Endothelial cell of umbilical vein (primary cell): ENCODE measurements at regions of chr2 and their contacts with region 1.

Region 1: DNA sequence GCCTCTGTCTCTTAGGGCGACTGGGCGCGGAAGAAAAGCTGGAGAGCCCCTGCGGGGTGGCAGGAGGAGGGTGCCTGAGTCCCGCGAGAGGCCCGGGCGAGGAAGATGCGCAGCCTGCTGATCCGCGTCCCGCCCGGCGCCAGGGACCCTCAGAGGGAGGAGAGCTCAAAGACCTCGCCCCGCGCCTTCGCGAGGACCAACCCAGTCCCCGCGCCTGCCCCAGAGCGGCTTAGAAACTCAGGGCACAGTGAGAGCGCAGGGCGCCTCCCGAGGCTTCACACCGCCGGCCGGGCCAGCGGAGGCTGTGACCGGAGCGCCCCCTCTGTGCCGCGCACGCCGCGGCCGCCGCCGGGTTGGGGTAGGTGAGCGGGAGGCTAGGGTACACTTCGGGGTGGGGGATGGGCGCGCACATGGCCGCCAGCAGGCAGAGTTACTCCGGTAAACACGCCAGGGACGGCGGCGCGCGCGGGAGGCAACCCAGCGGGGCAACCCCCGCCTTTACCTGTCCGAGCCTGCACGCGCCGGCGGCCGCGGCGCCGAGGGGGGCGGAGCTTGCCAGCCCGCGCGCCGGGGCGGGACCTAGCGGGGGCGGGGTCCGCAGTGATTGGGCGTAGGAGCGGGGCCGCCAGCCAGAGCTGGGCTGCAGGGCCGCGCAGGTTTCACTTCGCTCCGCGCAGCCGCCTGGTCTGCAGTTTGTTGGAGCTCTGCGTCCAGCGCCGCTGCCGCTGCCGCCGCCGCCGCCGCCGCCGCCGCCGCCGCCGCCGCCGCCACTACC is at the start of gene BCL2L11:
- DNase-seq: peak; percentile 92
- H3K4me3 ChIP-seq: peak within 1 kb of the TSS; percentile 18 to 93 (median 40)
- H3K27ac ChIP-seq: no peak within 1 kb of the TSS
- H3K4me1 ChIP-seq: peaks cover 37% of the 10 kb centered on the region
- H3K27me3 ChIP-seq: peaks cover 17 to 47% of the 10 kb centered on the region in 2 experiments
- CTCF ChIP-seq: peak; percentile 8 to 38
- POLR2A ChIP-seq: peak; percentile 70
- total RNA-seq, gene BCL2L11: 22.2 and 26.6 TPM in 2 replicates

Region 2: DNA sequence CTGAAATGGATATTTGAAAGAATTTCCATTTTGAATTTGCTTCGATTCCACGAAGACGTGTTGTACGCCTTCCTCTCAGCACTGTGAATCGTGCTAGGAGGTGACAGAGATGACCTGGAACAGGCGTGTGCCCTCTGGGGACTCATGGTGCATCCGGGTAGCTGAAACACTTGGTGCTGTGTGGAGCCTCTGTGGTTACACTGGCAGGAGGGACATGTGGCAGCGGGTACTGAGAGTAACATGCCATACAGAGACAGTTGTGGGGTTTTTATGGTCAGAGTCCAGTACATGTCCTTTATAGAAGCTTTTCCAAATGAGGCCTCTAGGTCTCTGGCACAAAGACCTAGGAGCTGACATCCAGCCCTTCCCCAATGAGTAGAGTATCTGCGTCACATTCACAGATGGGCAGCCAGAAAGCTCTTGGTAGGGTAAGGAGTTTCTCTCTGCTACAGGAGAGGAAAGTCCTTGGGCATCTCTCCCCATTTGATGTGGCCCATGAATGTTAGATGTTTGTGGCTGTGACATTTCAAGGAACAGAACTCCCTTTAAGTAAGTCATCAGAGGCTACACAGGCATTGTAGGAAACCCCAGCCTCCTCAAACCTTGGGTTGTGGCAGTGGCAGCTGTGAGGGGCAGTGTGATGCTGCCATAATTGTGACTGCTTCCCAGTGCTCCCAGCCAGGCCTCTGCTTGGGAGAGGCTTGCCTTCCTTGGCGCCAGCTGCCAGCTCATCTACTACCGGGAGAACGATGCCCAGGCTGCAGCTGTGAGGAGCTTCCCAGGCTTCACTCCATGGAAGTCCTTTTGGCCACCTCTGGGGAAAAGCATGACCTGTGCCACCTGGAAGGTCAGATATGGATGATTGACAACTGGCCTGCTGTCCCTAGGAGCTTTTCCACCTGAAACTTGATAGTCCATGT is 307.5 kb before region 1 on chr2:
- CTCF ChIA-PET with region 1: interaction called, 6 read pairs
- POLR2A ChIA-PET with region 1: no interaction called
- dilution Hi-C with region 1: no loop called
- intact Hi-C with region 1: loop called (anchors 5 kb)
- DNase-seq: no peak
- H3K4me3 ChIP-seq: no peak overlapping the region
- H3K27ac ChIP-seq: no peak overlapping the region
- H3K4me1 ChIP-seq: no peaks in the 10 kb centered on the region
- H3K27me3 ChIP-seq: peaks cover 3 to 13% of the 10 kb centered on the region in 2 experiments
- CTCF ChIP-seq: no peak
- POLR2A ChIP-seq: no peak

Region 3: GRCh38 chr2:111071600-111072171 is 48.8 kb before region 1 on chr2:
- CTCF ChIA-PET with region 1: interaction called, 5 read pairs
- POLR2A ChIA-PET with region 1: interaction called, 3 read pairs
- dilution Hi-C with region 1: no loop called
- intact Hi-C with region 1: loop called (anchors 1 kb)
- DNase-seq: peak; percentile 99
- H3K4me3 ChIP-seq: peak overlapping the region in 1 of 3 experiments; percentile 15
- H3K27ac ChIP-seq: peak overlapping the region; percentile 95
- H3K4me1 ChIP-seq: peaks cover 22% of the 10 kb centered on the region
- H3K27me3 ChIP-seq: no peaks in the 10 kb centered on the region
- CTCF ChIP-seq: no peak
- POLR2A ChIP-seq: no peak

Region 4: GRCh38 chr2:111162718-111163331 is 42.4 kb after region 1 on chr2:
- CTCF ChIA-PET with region 1: interaction called, 10 read pairs
- POLR2A ChIA-PET with region 1: interaction called, 9 read pairs
- dilution Hi-C with region 1: no loop called
- intact Hi-C with region 1: loop called (anchors 1 kb)
- DNase-seq: peak; percentile 97
- H3K4me3 ChIP-seq: no peak overlapping the region
- H3K27ac ChIP-seq: peak overlapping the region; percentile 39
- H3K4me1 ChIP-seq: peaks cover 31% of the 10 kb centered on the region
- H3K27me3 ChIP-seq: peaks cover 5 to 25% of the 10 kb centered on the region in 2 experiments
- CTCF ChIP-seq: no peak
- POLR2A ChIP-seq: peak; percentile 79

Region 5: GRCh38 chr2:111698743-111699554 is 578.5 kb after region 1 on chr2:
- CTCF ChIA-PET with region 1: interaction called, 23 read pairs
- POLR2A ChIA-PET with region 1: interaction called, 8 read pairs
- dilution Hi-C with region 1: no loop called
- intact Hi-C with region 1: loop called (anchors 1 kb)
- DNase-seq: peak; percentile 95
- H3K4me3 ChIP-seq: no peak overlapping the region
- H3K27ac ChIP-seq: peak overlapping the region; percentile 76
- H3K4me1 ChIP-seq: peaks cover 39% of the 10 kb centered on the region
- H3K27me3 ChIP-seq: no peaks in the 10 kb centered on the region
- CTCF ChIP-seq: peak; percentile 46 to 57
- POLR2A ChIP-seq: no peak